Heart left ventricle (tissue), 16 donors: ENCODE measurements at regions of chr15 and their contacts with region 1.

Region 1: GRCh38 chr15:79051029-79051428 is 39.6 kb downstream of the RASGRF1 start:
- DNase-seq: no peak
- ATAC-seq: no peak
- H3K4me3 ChIP-seq: no peak overlapping the region
- H3K27ac ChIP-seq: no peak overlapping the region
- H3K4me1 ChIP-seq: no peaks in the 10 kb centered on the region
- H3K27me3 ChIP-seq: no peaks in the 10 kb centered on the region
- CTCF ChIP-seq: no peak
- POLR2A ChIP-seq: no peak

Region 2: GRCh38 chr15:79101866-79102578 is 51.0 kb after region 1 on chr15:
- intact Hi-C with region 1: loop called in 1 of 10 experiments (anchors 5 kb)
- DNase-seq: no peak
- ATAC-seq: no peak
- H3K4me3 ChIP-seq: no peak overlapping the region
- H3K27ac ChIP-seq: no peak overlapping the region
- H3K4me1 ChIP-seq: no peaks in the 10 kb centered on the region
- H3K27me3 ChIP-seq: peaks cover 0 to 78% (median 6%) of the 10 kb centered on the region in 9 donors
- CTCF ChIP-seq: no peak
- POLR2A ChIP-seq: no peak

Region 3: GRCh38 chr15:79122991-79123390 is 72.0 kb after region 1 on chr15:
- intact Hi-C with region 1: loop called in 1 of 10 experiments (anchors 2 kb)
- DNase-seq: no peak
- ATAC-seq: no peak
- H3K4me3 ChIP-seq: no peak overlapping the region
- H3K27ac ChIP-seq: no peak overlapping the region
- H3K4me1 ChIP-seq: no peaks in the 10 kb centered on the region
- H3K27me3 ChIP-seq: peaks cover 0 to 8% (median 0%) of the 10 kb centered on the region in 9 donors
- CTCF ChIP-seq: no peak
- POLR2A ChIP-seq: no peak